Activated naive CD4-positive, alpha-beta T cell treated with anti-CD3 and anti-CD28 coated beads, Interleukin-2, amount 10 ng/mL, durations not matched to agents 7 days and 5 days (primary cell): ENCODE measurements at regions of chr11 and their contacts with region 1.

Region 1: DNA sequence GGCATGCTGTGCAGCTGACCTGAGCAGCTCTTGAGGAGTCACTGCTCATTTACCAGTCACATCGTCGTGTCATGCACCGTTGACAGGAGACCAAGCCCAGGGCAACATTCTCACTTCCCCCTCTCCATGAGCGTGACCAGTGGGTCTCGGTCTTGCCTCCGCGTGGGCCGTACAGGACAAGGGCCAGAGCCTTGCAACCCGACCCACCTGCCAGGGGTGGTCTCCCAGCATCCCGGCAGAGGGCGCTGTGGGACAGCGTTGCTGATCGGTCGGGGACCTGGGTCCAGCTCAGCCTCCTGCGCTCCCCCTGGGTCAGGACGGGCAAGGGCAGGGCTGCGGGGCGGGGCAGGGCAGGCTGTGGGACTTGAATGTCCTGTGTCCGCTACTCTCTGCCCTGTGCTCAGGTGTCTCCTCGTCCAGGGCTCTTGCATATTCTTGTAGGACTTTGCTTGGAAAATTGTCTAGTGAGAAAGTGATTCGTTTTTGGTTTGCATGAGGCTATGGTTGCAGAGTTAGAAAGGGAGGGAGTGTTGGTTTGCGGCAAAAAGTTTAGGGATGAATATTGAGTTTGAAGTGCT is 16.2 kb downstream of the EIF4G2 start:
- DNase-seq: peak; percentile 90
- H3K4me3 Mint-ChIP-seq: no peak overlapping the region
- H3K27ac Mint-ChIP-seq: no peak overlapping the region
- H3K4me1 Mint-ChIP-seq: peaks cover 21% of the 10 kb centered on the region
- H3K27me3 Mint-ChIP-seq: peaks cover 33% of the 10 kb centered on the region

Region 2: GRCh38 chr11:10293423-10294289 is 498.8 kb before region 1 on chr11 and contains the start of gene SBF2:
- CTCF ChIA-PET with region 1: no interaction called
- DNase-seq: peak; percentile 83
- H3K4me3 Mint-ChIP-seq: peak within 1 kb of the TSS; percentile 74
- H3K27ac Mint-ChIP-seq: no peak within 1 kb of the TSS
- H3K4me1 Mint-ChIP-seq: peaks cover 37% of the 10 kb centered on the region
- H3K27me3 Mint-ChIP-seq: peaks cover 64% of the 10 kb centered on the region

Region 3: DNA sequence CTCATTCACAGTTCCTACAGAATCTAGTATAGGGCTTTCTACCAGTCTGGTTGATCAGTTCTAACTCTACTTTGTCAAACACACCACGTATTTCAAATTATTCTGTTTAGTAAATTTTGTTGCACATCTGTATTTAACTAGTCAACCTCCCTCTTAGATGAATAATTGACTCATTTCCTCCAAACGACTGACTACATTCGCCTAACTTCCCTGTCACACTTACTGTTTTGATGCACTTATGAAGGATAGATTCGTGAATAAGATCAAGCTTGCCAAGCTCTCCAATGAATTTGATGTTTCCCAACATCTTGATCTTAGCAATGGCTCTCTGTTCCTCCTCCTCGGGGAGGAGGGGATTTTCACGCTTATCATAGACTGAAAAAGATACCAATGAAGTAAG is 11.2 kb after region 1 on chr11:
- CTCF ChIA-PET with region 1: interaction called, 37 read pairs
- DNase-seq: no peak
- H3K4me3 Mint-ChIP-seq: no peak overlapping the region
- H3K27ac Mint-ChIP-seq: no peak overlapping the region
- H3K4me1 Mint-ChIP-seq: peaks cover 78% of the 10 kb centered on the region
- H3K27me3 Mint-ChIP-seq: peaks cover 5% of the 10 kb centered on the region

Region 4: GRCh38 chr11:10933455-10934292 is 141.2 kb after region 1 on chr11:
- CTCF ChIA-PET with region 1: interaction called, 18 read pairs
- DNase-seq: peak; percentile 87
- H3K4me3 Mint-ChIP-seq: peak overlapping the region; percentile 58
- H3K27ac Mint-ChIP-seq: no peak overlapping the region
- H3K4me1 Mint-ChIP-seq: peaks cover 27% of the 10 kb centered on the region
- H3K27me3 Mint-ChIP-seq: peaks cover 77% of the 10 kb centered on the region

Region 5: GRCh38 chr11:11022125-11022730 is 229.7 kb after region 1 on chr11:
- CTCF ChIA-PET with region 1: interaction called, 48 read pairs
- DNase-seq: peak; percentile 31
- H3K4me3 Mint-ChIP-seq: no peak overlapping the region
- H3K27ac Mint-ChIP-seq: no peak overlapping the region
- H3K4me1 Mint-ChIP-seq: no peaks in the 10 kb centered on the region
- H3K27me3 Mint-ChIP-seq: no peaks in the 10 kb centered on the region

Region 6: DNA sequence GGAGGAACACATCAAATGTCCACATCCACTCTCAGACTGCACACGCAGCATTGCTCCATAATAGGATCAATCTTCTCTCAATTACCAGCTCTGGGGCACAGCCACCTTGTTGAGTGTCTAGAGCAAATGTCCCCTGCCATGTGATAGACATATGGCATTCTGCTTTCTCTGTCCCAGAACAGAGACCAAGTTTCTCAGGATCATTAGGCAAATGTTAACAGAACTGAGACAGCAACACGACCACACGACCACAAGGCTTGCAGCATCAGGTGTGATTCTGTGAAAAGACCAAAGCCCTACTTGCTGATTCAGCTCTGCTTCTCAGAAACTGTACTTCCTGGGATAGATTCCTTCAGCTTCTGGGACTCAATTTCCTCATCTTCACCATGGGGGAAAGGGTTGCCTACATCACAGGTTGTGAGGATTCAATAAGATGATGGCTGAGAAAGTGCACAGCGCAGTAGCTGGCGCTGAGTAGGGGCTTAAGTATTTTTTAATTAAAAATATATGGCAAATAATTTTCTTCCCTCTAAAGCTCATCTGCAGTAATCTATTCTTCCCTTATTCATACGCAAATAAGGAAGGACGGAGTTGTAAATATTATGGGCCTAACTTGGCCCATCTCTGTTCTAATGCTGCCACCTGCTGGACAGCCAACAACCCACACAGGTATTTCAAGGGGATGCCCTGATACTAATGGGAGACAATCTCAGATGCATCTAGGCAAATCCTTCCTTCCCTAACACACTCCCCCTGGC is 995.0 kb after region 1 on chr11:
- CTCF ChIA-PET with region 1: interaction called, 12 read pairs
- DNase-seq: peak; percentile 80
- H3K4me3 Mint-ChIP-seq: no peak overlapping the region
- H3K27ac Mint-ChIP-seq: no peak overlapping the region
- H3K4me1 Mint-ChIP-seq: no peaks in the 10 kb centered on the region
- H3K27me3 Mint-ChIP-seq: peaks cover 7% of the 10 kb centered on the region